AG04450 (cell line): ENCODE measurements at regions of chr7 and their contacts with region 1.

Region 1: GRCh38 chr7:139915864-139916716 is 87.0 kb downstream of the TBXAS1 start:
- DNase-seq: peak; percentile 94
- H3K4me3 ChIP-seq: no peak overlapping the region
- H3K27ac ChIP-seq: peak overlapping the region; percentile 95
- H3K27me3 ChIP-seq: no peaks in the 10 kb centered on the region
- CTCF ChIP-seq: no peak

Region 2: DNA sequence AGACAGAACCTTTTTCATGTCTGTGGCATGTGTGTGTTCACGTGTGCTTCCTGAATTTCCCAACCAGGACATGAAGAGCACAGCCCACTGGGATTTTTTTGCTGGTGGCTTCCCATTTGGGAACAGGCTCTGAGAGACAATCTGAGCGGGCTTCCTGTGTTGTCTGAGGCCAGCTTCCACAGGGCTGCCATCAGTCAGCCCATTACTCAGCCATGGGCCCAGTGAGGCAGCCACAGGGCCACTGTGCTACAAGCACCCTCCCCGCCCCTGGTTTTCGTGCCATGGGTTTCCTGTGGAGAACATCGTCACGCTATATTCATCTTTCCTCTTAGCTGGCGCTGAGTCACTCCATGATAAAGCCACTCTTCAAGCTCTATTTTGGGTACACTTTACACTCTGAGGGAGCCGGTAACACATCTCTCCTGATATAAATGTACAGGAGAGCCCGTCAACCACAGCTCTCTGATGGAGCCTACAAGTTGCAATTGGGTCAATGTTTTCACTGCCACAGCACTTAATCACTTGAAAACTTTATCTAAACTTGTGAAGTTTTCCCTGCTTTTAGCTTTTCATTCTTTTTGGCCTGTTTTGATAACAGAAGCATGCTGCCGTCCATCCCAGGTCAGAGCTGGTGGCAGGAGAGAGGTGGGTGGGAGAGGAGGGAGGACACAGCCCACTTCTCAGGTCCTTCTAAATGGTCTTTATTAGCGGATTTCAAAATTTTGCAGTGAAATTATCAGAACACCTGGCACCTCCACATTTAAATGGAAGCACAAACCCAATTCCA is 235.2 kb before region 1 on chr7:
- CTCF ChIA-PET with region 1: no interaction called
- POLR2A ChIA-PET with region 1: interaction called, 18 read pairs
- DNase-seq: peak; percentile 77
- H3K4me3 ChIP-seq: no peak overlapping the region
- H3K27ac ChIP-seq: peak overlapping the region; percentile 98
- H3K27me3 ChIP-seq: no peaks in the 10 kb centered on the region
- CTCF ChIP-seq: no peak

Region 3: DNA sequence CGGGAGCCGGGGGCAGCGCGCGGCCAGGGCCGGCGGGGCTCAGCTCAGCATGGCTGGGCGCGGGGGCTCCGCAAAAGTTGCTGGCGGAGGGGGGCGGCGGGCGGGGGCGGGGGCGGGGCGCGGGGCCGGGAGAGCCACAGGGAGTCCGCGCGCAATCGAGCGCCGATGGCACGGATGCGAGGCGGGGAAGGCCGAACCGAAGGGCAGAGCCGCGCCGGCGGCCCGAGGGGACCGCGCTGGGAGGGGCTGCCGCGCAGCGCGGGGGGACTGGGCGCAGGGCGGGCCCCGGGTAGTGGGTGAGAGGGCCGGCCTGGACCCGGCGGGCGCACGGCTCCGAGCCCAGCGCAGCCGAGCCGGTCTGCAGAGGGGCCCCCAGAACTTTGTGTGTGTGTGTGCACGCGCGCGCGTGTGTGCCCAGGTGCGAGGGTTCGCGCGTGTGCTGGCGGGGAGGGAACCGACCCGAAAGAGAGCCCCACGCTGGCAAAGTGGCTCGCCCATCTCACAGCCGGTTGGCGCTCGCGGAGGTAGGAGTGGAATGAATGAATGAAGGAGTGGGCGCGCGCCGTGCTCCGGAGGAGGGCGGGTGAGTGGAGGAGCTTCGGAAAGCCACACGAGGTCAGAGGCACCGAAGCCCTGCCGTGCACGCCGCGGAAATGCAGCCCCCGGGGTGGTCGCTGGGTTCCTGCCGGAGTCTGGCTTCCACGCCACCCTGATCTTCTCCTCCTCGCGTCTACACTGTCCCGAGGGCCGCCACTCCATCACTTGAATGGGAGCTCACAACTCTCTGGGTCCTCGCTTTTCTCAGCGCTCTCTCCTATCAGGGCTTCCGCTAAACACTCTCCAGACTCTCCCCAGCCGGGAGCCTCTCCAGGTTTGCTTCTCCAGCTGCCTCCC is 137.9 kb before region 1 on chr7 and contains the start of gene HIPK2:
- CTCF ChIA-PET with region 1: no interaction called
- POLR2A ChIA-PET with region 1: interaction called, 11 read pairs
- DNase-seq: no peak
- H3K4me3 ChIP-seq: peak within 1 kb of the TSS; percentile 88
- H3K27ac ChIP-seq: peak within 1 kb of the TSS; percentile 96
- H3K27me3 ChIP-seq: no peaks in the 10 kb centered on the region
- CTCF ChIP-seq: no peak
- polyA plus RNA-seq, gene HIPK2: 61.4 and 74.6 TPM in 2 replicates

Region 4: GRCh38 chr7:139823959-139824521 is 92.0 kb before region 1 on chr7:
- CTCF ChIA-PET with region 1: no interaction called
- POLR2A ChIA-PET with region 1: interaction called, 21 read pairs
- DNase-seq: peak; percentile 68
- H3K4me3 ChIP-seq: peak overlapping the region; percentile 7; the same call in 1 of the 2 replicates
- H3K27ac ChIP-seq: peak overlapping the region; percentile 60
- H3K27me3 ChIP-seq: peaks cover 3% of the 10 kb centered on the region
- CTCF ChIP-seq: no peak

Region 5: DNA sequence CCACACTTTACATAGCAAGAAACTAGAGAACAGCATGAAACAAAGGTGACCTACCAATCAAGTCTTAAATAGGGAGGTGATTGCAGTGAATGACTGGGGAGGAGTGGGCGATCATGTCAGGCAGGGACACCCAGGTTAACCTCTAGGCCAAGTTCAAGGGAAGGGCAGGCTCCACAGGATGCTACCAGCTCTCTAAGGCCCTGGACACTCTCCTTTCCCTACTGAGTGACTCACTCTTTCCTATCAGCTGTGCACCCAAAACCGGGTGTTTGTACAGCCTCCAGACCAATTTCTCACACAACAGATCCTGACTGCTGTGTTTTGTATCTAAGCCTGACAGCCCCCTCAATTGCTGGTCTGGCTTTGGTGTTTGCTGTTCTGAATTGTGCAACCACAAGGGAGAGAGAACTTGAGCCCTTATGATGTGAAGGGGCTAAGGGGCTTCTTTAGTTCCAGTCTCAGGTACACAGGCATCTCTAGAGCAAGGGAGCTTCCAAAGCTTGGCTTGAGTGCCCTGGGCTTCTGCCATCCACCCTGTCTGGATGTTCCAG is 20.7 kb after region 1 on chr7:
- CTCF ChIA-PET with region 1: no interaction called
- POLR2A ChIA-PET with region 1: interaction called, 11 read pairs
- DNase-seq: peak; percentile 62
- H3K4me3 ChIP-seq: no peak overlapping the region
- H3K27ac ChIP-seq: peak overlapping the region; percentile 75
- H3K27me3 ChIP-seq: no peaks in the 10 kb centered on the region
- CTCF ChIP-seq: no peak

Region 6: DNA sequence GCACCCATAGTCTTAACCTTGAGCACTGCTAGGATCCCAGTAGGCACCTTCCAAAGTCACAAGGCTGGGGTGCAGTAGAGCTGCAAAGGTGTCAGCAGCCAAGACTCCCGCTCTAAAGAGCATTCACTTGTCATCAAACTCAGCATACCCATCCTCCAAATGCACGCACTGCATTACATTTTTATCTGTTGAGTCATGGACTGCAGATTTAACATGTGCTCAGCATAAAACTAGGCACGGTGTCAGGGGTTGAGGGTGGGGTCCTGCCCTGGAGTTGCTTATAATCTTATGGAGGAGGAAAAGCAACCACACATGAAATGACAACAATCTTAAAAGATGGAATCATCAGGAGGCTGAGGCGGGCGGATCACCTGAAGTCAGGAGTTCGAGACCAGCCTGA is 44.1 kb after region 1 on chr7:
- CTCF ChIA-PET with region 1: no interaction called
- POLR2A ChIA-PET with region 1: interaction called, 40 read pairs
- DNase-seq: no peak
- H3K4me3 ChIP-seq: no peak overlapping the region
- H3K27ac ChIP-seq: peak overlapping the region; percentile 87
- H3K27me3 ChIP-seq: no peaks in the 10 kb centered on the region
- CTCF ChIP-seq: no peak

Region 7: DNA sequence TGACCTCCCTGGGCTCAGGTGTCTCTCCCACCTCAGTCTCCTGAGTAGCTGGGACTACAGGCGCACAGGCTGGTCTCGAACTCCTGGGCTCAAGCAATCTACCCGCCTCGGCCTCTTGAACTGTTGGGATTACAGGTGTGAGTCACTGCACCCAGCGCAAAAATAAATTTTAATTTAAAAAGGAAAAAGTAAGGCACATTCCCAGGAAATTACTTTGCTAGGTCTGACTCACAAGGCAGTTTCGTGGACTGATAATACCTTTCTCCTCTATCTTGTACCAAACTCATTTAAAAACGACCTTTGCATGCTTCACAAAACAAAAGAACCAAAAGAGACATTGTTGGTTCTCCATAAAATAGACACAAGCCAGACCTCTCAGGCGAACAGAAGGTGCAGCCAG is 116.9 kb after region 1 on chr7:
- CTCF ChIA-PET with region 1: no interaction called
- POLR2A ChIA-PET with region 1: no interaction called
- DNase-seq: no peak
- H3K4me3 ChIP-seq: no peak overlapping the region
- H3K27ac ChIP-seq: no peak overlapping the region
- H3K27me3 ChIP-seq: no peaks in the 10 kb centered on the region
- CTCF ChIP-seq: no peak

Region 8: DNA sequence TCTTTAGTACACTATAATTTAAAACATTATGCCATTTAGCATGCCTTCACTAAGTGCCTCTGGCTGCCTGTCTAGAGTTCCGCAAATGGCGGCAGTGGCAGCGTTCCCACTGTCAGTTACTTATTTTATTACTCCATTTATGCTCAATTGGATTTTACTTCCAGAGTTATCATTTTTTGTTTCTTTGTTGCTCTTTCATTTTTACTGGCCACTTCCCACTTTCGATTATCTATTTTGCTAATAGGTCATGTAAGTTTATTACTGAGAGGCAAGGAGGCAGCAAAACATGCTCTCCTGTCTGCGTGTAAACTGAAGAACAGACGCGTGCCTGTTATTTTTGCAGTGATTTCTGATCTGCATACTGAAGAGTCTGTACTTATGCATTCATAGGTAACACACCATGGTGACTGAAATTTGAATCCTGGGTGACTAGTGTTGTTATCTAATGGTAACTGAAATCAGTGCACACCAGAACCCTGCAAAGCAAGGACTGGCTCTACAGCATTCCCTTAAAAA is 237.6 kb after region 1 on chr7:
- CTCF ChIA-PET with region 1: no interaction called
- POLR2A ChIA-PET with region 1: no interaction called
- DNase-seq: no peak
- H3K4me3 ChIP-seq: no peak overlapping the region
- H3K27ac ChIP-seq: no peak overlapping the region
- H3K27me3 ChIP-seq: no peaks in the 10 kb centered on the region
- CTCF ChIP-seq: no peak

Region 9: GRCh38 chr7:141409801-141410329 is 1493.8 kb after region 1 on chr7:
- CTCF ChIA-PET with region 1: no interaction called
- POLR2A ChIA-PET with region 1: no interaction called
- DNase-seq: no peak
- H3K4me3 ChIP-seq: no peak overlapping the region
- H3K27ac ChIP-seq: no peak overlapping the region
- H3K27me3 ChIP-seq: no peaks in the 10 kb centered on the region
- CTCF ChIP-seq: no peak